Activated naive CD8-positive, alpha-beta T cell treated with anti-CD3 and anti-CD28 coated beads, Interleukin-2, amount 10 ng/mL, durations not matched to agents 7 days and 5 days (primary cell): ENCODE measurements at regions of chr17 and their contacts with region 1.

Region 1: GRCh38 chr17:8162233-8162996 is at the start of gene VAMP2:
- DNase-seq: peak; percentile 95
- ATAC-seq: peak; percentile 41
- H3K4me3 Mint-ChIP-seq: peak within 1 kb of the TSS; percentile 88
- H3K27ac Mint-ChIP-seq: peak within 1 kb of the TSS; percentile 100
- H3K4me1 Mint-ChIP-seq: peaks cover 47% of the 10 kb centered on the region
- H3K27me3 Mint-ChIP-seq: no peaks in the 10 kb centered on the region
- total RNA-seq, gene VAMP2: 116 to 118 TPM

Region 2: DNA sequence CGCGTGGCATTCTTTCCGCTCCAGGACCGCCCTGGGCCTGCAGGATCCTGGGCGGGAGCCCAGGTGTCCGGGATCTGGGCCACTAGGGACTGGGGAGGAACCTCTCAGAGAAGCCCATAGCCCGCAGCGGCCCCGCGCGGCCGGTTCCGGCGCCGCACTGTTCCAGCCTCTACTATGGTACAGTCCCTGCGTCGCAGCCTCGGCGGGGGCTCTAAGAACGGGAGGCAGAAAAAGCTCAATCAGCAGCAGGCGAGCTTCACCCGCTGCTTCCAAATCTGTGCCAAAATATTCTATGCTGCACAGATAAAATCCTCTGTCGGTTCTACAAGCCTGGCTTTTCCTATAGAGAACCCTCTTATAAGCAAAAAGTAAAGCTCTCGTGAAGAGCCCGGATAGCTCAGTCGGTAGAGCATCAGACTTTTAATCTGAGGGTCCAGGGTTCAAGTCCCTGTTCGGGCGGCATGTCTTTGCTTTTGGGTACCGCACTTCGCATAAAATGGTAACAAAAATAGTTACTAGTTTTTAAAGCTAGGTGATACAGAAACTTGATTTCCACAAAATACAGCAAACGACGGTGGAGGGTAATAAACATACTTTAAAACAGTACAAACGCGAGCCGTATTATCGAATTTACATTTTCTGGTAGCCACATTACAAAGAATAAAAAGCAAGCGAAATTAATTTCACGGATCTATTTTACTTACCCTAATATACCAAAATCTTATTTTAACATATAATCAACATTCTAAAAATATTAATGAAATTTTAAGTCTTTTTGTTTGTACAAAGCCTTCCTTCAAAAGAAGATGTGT is 43.4 kb before region 1 on chr17:
- POLR2A ChIA-PET with region 1: interaction called, 10 read pairs
- DNase-seq: peak; percentile 90
- ATAC-seq: peak; percentile 68
- H3K4me3 Mint-ChIP-seq: peak overlapping the region; percentile 91
- H3K27ac Mint-ChIP-seq: peak overlapping the region; percentile 92
- H3K4me1 Mint-ChIP-seq: peaks cover 46% of the 10 kb centered on the region
- H3K27me3 Mint-ChIP-seq: peaks cover 61% of the 10 kb centered on the region

Region 3: DNA sequence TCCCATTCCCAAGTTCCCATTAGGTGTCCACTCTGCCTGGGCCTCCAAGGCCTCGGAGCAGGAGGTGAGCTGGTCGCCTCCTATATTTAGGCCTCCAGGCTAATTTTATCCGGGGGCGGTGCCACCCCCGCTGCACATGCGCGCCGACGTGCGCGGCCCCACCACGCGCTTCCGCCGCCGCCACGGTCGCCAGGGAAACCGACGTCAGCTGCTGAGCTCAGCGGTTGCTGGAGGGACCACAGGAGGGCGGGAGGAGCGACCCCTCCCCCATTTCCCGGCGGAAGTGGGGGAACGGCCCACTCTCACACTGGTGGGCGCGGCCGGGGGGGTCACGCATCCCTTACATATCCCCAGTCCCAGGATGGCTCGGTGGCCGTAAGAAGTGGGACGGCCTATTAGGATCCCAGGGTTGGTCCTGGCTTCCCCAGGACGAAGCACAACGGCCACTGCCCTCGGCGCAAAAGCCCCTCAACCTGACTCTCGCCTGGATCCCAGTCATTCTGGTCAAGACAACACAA is 11.2 kb before region 1 on chr17:
- POLR2A ChIA-PET with region 1: interaction called, 11 read pairs
- DNase-seq: peak; percentile 94
- ATAC-seq: peak; percentile 31
- H3K4me3 Mint-ChIP-seq: peak overlapping the region; percentile 95
- H3K27ac Mint-ChIP-seq: no peak overlapping the region
- H3K4me1 Mint-ChIP-seq: peaks cover 37% of the 10 kb centered on the region
- H3K27me3 Mint-ChIP-seq: no peaks in the 10 kb centered on the region